ENCODE measurements at regions of chr1 and their contacts with region 1.

Region 1: DNA sequence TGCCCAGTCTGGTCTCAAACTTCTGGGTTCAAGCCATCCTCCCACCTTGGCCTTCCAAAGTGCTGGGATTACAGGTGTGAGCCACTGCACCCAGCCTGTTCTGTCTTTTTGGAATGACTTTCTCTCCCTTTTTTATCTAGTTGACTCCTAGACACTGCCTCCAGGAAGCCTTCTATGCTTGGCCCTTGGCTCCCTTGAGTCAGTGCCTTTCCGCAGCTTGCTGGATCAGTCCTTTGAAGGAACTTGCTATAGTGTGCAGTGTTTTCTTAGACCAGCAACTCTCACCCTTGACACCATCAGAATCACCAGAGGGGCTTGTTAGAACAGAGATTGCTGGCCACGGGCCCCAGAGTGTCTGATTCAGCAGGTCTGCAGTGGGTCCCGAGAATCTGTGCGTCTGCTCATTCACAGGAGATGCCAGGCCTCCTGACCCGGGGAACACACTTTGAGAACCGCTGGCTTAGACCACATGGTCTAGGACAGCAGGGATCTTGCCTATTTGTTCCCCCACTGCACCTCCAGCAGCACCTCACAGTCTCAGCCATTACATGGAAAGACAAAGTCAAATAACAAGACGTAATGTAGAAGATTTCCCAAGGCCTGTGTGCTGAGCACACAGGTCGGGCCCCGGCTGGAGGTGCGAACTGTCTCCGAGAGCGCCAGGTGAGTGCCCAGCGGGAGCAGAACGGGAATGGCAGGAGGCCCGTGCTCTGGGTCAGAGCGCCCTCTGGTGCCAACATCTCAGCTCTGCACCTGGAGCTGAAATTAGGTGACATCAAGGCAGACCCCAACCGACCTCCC is 27.4 kb upstream of the CTPS1 start:
- DNase-seq: peak; percentile 24 to 67 (median 39)
- ATAC-seq: peak; percentile 71
- H3K4me3 ChIP-seq: no peak overlapping the region
- H3K4me3 Mint-ChIP-seq: peak overlapping the region in 4 of 10 donors; percentile 18 to 49 (median 28)
- H3K27ac ChIP-seq: no peak overlapping the region
- H3K27ac Mint-ChIP-seq: no peak overlapping the region
- H3K4me1 ChIP-seq: peaks cover 0 to 3% of the 10 kb centered on the region in 2 donors
- H3K4me1 Mint-ChIP-seq: peaks cover 5 to 19% (median 8%) of the 10 kb centered on the region in 7 donors
- H3K27me3 ChIP-seq: no peaks in the 10 kb centered on the region
- H3K27me3 Mint-ChIP-seq: peaks cover 9 to 34% (median 29%) of the 10 kb centered on the region in 5 donors

Region 2: GRCh38 chr1:40612345-40612831 is 339.8 kb before region 1 on chr1:
- CTCF ChIA-PET with region 1: interaction called, 4 read pairs
- POLR2A ChIA-PET with region 1: no interaction called
- intact Hi-C with region 1: loop called (anchors 1 kb)
- DNase-seq: peak in 8 of 9 donors; percentile 45 to 75 (median 68)
- ATAC-seq: peak; percentile 94
- H3K4me3 ChIP-seq: no peak overlapping the region
- H3K4me3 Mint-ChIP-seq: no peak overlapping the region
- H3K27ac ChIP-seq: no peak overlapping the region
- H3K27ac Mint-ChIP-seq: no peak overlapping the region
- H3K4me1 ChIP-seq: no peaks in the 10 kb centered on the region
- H3K4me1 Mint-ChIP-seq: peaks cover 0 to 4% (median 0%) of the 10 kb centered on the region in 7 donors
- H3K27me3 ChIP-seq: no peaks in the 10 kb centered on the region
- H3K27me3 Mint-ChIP-seq: peaks cover 0 to 7% (median 0%) of the 10 kb centered on the region in 5 donors

Region 3: GRCh38 chr1:42504535-42505128 is 1552.5 kb after region 1 on chr1:
- CTCF ChIA-PET with region 1: no interaction called
- POLR2A ChIA-PET with region 1: no interaction called
- intact Hi-C with region 1: no loop called
- DNase-seq: no peak
- ATAC-seq: no peak
- H3K4me3 ChIP-seq: no peak overlapping the region
- H3K4me3 Mint-ChIP-seq: no peak overlapping the region
- H3K27ac ChIP-seq: no peak overlapping the region
- H3K27ac Mint-ChIP-seq: no peak overlapping the region
- H3K4me1 ChIP-seq: no peaks in the 10 kb centered on the region
- H3K4me1 Mint-ChIP-seq: no peaks in the 10 kb centered on the region
- H3K27me3 ChIP-seq: no peaks in the 10 kb centered on the region
- H3K27me3 Mint-ChIP-seq: no peaks in the 10 kb centered on the region